ENCODE measurements at regions of chr2 and their contacts with region 1.

Region 1: DNA sequence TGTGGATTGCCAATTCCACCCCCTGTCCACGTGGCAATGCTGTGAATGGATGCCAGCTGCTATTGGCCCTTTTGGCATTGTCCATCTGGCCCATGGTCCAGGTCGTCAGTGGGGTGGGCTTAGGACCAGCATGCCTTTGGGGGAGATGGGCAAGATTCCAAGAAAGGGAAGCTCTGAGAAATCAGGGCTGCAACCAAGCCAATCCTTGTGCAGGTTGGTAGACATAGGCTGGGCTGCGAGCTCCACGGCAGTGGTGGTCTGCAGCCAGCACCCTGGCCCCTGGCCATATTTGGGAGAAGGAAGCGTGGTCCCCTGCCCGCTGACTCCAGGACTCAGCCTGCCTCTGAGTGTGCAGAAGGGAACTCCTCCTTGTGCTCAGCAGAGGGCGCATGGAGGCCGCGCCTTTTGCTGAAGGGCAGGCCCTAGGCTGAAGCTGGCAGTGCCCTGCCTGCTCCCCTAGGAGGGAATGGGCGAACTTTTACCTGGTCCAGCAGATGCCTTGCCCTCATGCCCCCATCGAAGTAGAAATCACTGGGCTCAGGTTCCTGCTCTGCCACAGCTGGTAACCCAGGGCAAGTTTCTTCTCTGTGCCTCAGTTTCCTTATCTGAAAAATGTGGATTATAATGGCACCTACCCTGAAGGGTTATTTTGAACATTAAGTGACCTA is 5.4 kb downstream of the SPR start:
- DNase-seq: peak; percentile 63 to 74
- ATAC-seq: peak; percentile 69 to 81 (median 80)
- H3K4me3 ChIP-seq: no peak overlapping the region
- H3K27ac ChIP-seq: no peak overlapping the region
- H3K4me1 ChIP-seq: peaks cover 19% of the 10 kb centered on the region
- H3K27me3 ChIP-seq: peaks cover 0 to 17% (median 4%) of the 10 kb centered on the region in 3 donors
- CTCF ChIP-seq: peak; percentile 69

Region 2: GRCh38 chr2:72953976-72954375 is 61.3 kb after region 1 on chr2:
- intact Hi-C with region 1: no loop called
- DNase-seq: no peak
- ATAC-seq: no peak
- H3K4me3 ChIP-seq: no peak overlapping the region
- H3K27ac ChIP-seq: no peak overlapping the region
- H3K4me1 ChIP-seq: no peaks in the 10 kb centered on the region
- H3K27me3 ChIP-seq: no peaks in the 10 kb centered on the region
- CTCF ChIP-seq: no peak

Region 3: GRCh38 chr2:72973566-72974435 is 81.2 kb after region 1 on chr2:
- intact Hi-C with region 1: loop called in 1 of 2 experiments (anchors 5 kb)
- DNase-seq: peak in 1 of 2 donors; percentile 49
- ATAC-seq: peak in 3 of 4 donors; percentile 76 to 84 (median 82)
- H3K4me3 ChIP-seq: no peak overlapping the region
- H3K27ac ChIP-seq: no peak overlapping the region
- H3K4me1 ChIP-seq: no peaks in the 10 kb centered on the region
- H3K27me3 ChIP-seq: no peaks in the 10 kb centered on the region
- CTCF ChIP-seq: peak; percentile 63

Region 4: GRCh38 chr2:73176881-73177644 is 284.4 kb after region 1 on chr2:
- intact Hi-C with region 1: loop called (anchors 1 to 10 kb)
- DNase-seq: peak; percentile 93 to 95
- ATAC-seq: peak; percentile 94 to 99 (median 97)
- H3K4me3 ChIP-seq: peak overlapping the region; percentile 75
- H3K27ac ChIP-seq: peak overlapping the region; percentile 69
- H3K4me1 ChIP-seq: peaks cover 13% of the 10 kb centered on the region
- H3K27me3 ChIP-seq: peaks cover 0 to 46% (median 8%) of the 10 kb centered on the region in 3 donors
- CTCF ChIP-seq: peak; percentile 99

Measured in psoas muscle (tissue), 8 donors.